Cardiac septum (tissue), 1 donor: ENCODE measurements at regions of chr9 and their contacts with region 1.

Region 1: DNA sequence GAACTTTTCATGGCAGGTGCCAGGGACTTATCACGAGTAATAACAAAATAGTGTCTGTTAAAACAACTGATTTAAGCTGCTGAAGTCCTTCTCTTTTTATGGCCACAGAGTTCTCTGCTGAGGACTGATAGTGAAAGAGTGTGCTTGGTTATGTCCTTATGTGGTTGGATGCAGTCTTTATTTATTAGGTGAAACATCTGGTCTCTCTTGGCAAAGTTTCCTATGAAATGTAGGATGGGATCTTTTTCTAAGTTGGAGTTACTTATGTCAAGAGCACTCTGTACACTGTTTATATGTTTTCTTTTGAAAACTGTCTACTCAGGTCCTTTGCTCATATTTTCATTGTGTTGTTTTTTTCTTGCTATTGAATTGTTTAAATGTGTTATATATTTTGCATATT is 1816.1 kb upstream of the C9orf72 start:
- DNase-seq: no peak

Region 2: GRCh38 chr9:29322240-29322639 is 67.2 kb before region 1 on chr9:
- intact Hi-C with region 1: loop called (anchors 10 kb)
- DNase-seq: no peak

Region 3: DNA sequence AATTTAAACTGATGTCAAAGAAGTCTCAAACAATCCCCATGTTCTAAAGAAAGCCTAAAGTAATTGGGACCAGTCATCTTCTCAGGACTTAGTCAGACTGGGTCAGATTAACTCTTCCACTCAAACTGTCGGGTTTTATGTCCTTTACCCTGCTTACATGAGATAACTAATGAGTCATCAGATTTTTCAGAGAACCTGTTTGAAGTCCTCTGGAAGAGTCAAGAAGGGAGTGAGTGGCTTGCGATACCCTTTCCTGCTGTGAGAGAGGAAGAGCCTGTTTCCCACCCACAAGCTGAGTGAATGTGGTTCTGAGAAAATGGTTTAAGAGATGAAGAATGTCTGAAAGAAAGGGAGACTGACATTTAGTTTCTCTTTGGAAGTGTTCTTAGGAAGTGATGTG is 50.5 kb after region 1 on chr9:
- intact Hi-C with region 1: no loop called
- DNase-seq: no peak